ENCODE measurements at regions of chr1 and their contacts with region 1.

Region 1: DNA sequence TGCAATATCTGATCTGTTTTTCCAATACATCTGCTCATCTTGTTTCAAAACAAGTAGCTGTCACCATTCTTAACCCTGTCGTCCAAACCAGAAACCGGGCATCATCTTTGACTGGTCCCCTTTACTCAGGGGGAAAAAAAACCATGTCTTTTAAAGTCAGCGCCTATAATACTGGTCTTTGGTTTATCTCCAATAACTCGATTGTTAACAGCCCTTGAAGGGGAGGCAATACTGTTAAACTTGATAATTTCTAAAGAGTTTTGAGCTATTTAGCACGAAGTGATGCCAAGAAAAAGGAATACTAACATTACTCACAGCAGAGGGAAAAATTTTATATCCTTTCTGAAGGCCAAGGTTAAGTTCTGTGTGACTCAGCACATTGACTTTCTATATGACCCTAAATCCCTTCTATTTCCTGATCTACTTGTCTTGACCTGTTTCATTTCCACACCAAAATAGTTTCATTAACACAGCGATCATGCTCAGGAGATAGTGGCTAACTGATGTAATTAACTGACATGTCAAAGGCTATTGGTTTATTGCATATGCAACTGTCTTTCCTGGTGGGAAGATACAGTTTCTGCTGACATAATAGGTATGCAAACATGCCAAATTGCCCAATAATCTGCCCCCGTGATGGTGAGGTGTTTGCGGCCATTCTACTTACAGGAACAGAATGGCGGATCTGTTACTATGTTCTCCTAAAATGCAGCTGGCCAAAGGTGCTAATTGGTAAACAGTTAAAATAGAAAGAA is 59.1 kb downstream of the NFIA start:
- DNase-seq: peak; percentile 96
- H3K4me3 Mint-ChIP-seq: peak overlapping the region; percentile 40
- H3K27ac Mint-ChIP-seq: peak overlapping the region; percentile 85
- H3K4me1 Mint-ChIP-seq: peaks cover 41% of the 10 kb centered on the region
- H3K27me3 Mint-ChIP-seq: no peaks in the 10 kb centered on the region
- CTCF ChIP-seq: no peak

Region 2: GRCh38 chr1:60994369-60994768 is 147.1 kb before region 1 on chr1:
- CTCF ChIA-PET with region 1: no interaction called
- POLR2A ChIA-PET with region 1: no interaction called
- intact Hi-C with region 1: no loop called
- DNase-seq: no peak
- H3K4me3 Mint-ChIP-seq: no peak overlapping the region
- H3K27ac Mint-ChIP-seq: no peak overlapping the region
- H3K4me1 Mint-ChIP-seq: no peaks in the 10 kb centered on the region
- H3K27me3 Mint-ChIP-seq: no peaks in the 10 kb centered on the region
- CTCF ChIP-seq: no peak

Region 3: GRCh38 chr1:61049850-61050540 is 91.5 kb before region 1 on chr1:
- CTCF ChIA-PET with region 1: interaction called, 23 read pairs
- POLR2A ChIA-PET with region 1: interaction called, 25 read pairs
- intact Hi-C with region 1: loop called (anchors 5 kb)
- DNase-seq: peak; percentile 90
- H3K4me3 Mint-ChIP-seq: peak overlapping the region; percentile 76
- H3K27ac Mint-ChIP-seq: peak overlapping the region; percentile 19
- H3K4me1 Mint-ChIP-seq: peaks cover 20% of the 10 kb centered on the region
- H3K27me3 Mint-ChIP-seq: no peaks in the 10 kb centered on the region
- CTCF ChIP-seq: peak; percentile 93

Region 4: DNA sequence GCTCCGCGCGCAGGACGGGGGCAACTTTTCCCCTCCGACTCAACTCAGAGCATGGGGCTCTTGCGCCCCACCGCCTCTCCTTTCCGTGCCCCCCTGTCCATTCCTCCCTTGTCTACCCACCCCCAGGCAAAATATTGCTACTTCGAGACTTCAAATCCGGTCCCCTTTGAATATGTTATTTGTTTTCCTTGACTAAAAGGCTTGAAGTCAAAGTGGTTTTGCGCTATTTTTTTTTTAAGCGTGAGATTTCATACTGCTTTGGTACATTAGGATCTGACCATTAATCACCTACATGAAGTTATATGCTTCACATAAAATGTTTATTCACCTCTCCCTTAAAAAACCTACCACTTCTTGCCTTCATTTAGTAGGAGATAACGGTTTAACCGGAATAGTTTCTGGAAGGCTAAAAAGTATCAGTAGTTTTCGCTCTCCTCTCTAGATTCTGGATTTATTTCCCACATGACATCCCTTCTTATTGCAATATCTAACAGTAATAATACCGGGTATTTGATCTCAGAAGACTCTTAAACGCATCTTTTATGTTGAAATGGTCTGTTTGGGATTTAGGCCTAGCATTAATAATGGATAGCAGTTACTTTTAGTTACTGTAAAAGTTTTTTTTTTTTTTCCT is 57.5 kb before region 1 on chr1:
- CTCF ChIA-PET with region 1: interaction called, 3 read pairs
- POLR2A ChIA-PET with region 1: interaction called, 154 read pairs
- intact Hi-C with region 1: loop called (anchors 1 kb)
- DNase-seq: peak; percentile 36
- H3K4me3 Mint-ChIP-seq: peak overlapping the region; percentile 88
- H3K27ac Mint-ChIP-seq: peak overlapping the region; percentile 96
- H3K4me1 Mint-ChIP-seq: peaks cover 29% of the 10 kb centered on the region
- H3K27me3 Mint-ChIP-seq: no peaks in the 10 kb centered on the region
- CTCF ChIP-seq: no peak

Region 5: GRCh38 chr1:61120998-61121397 is 20.5 kb before region 1 on chr1:
- CTCF ChIA-PET with region 1: interaction called, 4 read pairs
- POLR2A ChIA-PET with region 1: interaction called, 93 read pairs
- intact Hi-C with region 1: no loop called
- DNase-seq: peak; percentile 70
- H3K4me3 Mint-ChIP-seq: peak overlapping the region; percentile 44
- H3K27ac Mint-ChIP-seq: peak overlapping the region; percentile 35
- H3K4me1 Mint-ChIP-seq: peaks cover 73% of the 10 kb centered on the region
- H3K27me3 Mint-ChIP-seq: no peaks in the 10 kb centered on the region
- CTCF ChIP-seq: no peak

Region 6: GRCh38 chr1:61210435-61211154 is 69.1 kb after region 1 on chr1:
- CTCF ChIA-PET with region 1: no interaction called
- POLR2A ChIA-PET with region 1: no interaction called
- intact Hi-C with region 1: no loop called
- DNase-seq: no peak
- H3K4me3 Mint-ChIP-seq: no peak overlapping the region
- H3K27ac Mint-ChIP-seq: no peak overlapping the region
- H3K4me1 Mint-ChIP-seq: no peaks in the 10 kb centered on the region
- H3K27me3 Mint-ChIP-seq: no peaks in the 10 kb centered on the region
- CTCF ChIP-seq: peak; percentile 13

Region 7: DNA sequence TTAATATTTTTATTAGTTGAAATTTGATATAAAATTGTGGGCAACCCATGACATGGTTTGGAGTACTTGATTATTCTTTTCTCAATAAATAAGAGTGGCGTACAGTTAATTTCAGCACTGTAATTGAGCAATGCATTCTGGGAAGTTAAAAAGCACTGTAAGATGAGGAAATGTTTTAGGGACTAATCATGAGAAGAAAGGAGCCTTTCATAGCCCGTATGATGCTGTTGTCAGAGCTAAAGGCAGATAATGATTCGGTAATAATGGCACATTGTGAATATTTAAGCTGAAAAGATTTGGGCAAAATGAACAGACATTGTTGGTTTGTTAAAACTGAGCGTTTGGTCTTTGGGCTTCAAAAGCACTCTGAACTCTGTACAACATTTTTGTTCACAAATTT is 80.2 kb after region 1 on chr1:
- CTCF ChIA-PET with region 1: interaction called, 4 read pairs
- POLR2A ChIA-PET with region 1: interaction called, 12 read pairs
- intact Hi-C with region 1: no loop called
- DNase-seq: no peak
- H3K4me3 Mint-ChIP-seq: no peak overlapping the region
- H3K27ac Mint-ChIP-seq: no peak overlapping the region
- H3K4me1 Mint-ChIP-seq: peaks cover 11% of the 10 kb centered on the region
- H3K27me3 Mint-ChIP-seq: no peaks in the 10 kb centered on the region
- CTCF ChIP-seq: no peak

Region 8: DNA sequence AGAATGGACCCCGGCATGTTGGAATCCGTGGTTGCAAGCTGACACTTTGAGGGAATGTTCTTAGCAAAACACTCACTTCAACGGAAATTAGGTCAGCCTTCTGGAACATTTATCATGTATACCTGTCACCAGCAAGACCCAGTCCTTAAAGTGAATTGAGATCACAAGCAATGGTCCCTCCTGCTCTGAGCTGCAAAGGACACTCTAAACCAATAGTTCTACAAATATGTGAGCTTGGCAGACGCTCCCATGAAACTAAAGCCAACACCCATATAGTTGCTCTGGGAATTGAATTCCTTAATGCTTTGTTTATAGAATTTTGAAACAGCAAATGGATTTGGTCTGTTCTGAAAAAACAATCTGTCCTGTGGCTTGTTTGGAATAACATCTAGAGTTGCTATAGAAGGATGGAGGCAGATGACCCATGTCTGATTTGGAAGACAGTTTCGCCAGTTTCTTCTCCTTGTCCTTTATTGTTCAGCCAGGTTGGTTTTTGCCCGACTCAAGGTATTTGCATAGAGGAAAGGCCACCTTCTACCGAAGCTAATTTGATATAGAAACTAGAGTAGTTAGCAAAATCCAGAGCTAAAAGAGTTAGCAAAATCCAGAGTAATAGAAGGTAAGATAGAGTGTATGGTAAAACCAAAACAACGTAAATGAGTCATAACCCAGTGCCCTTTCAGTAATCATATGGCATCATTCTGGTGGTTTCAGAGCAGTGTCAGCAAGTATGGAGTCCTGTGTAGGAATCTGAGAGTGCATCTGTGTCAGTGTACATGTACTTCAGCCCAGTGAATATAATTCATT is 177.1 kb after region 1 on chr1:
- CTCF ChIA-PET with region 1: no interaction called
- POLR2A ChIA-PET with region 1: interaction called, 12 read pairs
- intact Hi-C with region 1: loop called (anchors 5 kb)
- DNase-seq: peak; percentile 82
- H3K4me3 Mint-ChIP-seq: peak overlapping the region; percentile 64
- H3K27ac Mint-ChIP-seq: peak overlapping the region; percentile 99
- H3K4me1 Mint-ChIP-seq: peaks cover 38% of the 10 kb centered on the region
- H3K27me3 Mint-ChIP-seq: no peaks in the 10 kb centered on the region
- CTCF ChIP-seq: no peak

Measured in MCF 10A (cell line).